ENCODE measurements at regions of chr6 and their contacts with region 1.

Region 1: GRCh38 chr6:52263709-52264540 is 19.6 kb upstream of the IL17F start:
- DNase-seq: peak; percentile 17
- H3K4me3 ChIP-seq: no peak overlapping the region
- CTCF ChIP-seq: peak; percentile 91

Region 2: GRCh38 chr6:52155791-52156576 is 107.9 kb before region 1 on chr6:
- CTCF ChIA-PET with region 1: interaction called, 94 read pairs
- POLR2A ChIA-PET with region 1: no interaction called
- DNase-seq: no peak
- H3K4me3 ChIP-seq: no peak overlapping the region
- CTCF ChIP-seq: no peak

Region 3: DNA sequence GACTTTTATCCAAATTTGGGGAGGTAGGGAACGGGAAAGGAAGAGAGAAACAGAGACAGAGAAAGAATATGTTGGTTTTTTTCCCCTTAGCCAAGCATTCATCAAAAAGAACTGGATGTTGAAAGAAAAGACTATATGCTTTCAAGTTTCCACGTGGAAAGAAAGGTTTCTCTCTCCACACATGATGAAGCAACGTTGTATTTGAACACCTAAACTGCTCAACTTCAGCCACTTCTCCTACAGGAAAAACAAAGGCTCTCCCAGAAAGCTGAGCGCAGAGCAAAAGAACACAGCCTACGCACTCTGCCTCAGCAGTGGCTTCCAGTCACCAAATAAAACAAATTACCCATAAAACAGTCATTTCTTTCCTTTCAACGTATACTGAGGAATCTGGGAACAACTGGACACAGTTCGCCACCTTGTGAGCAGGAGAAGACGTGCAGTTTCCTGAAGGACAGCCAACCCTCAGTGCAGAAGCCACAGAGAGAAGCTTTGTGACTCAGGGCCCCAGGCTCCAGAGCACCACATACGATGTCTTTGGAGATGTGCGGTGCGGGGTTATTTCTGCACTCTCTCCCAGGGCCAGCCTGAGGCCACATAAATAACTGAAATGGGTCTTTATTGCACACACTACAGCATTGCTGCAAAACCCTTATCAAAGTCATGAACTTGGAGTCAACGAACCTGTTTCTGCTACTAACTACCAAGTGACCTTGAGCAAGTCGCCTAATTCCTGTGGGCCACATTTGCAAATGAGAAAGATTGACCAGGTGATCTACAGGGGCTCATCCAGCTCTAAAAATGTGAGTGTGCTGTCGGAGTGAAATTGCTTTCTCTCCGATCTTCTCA is 29.7 kb before region 1 on chr6:
- CTCF ChIA-PET with region 1: interaction called, 11 read pairs
- POLR2A ChIA-PET with region 1: no interaction called
- DNase-seq: peak; percentile 7
- H3K4me3 ChIP-seq: no peak overlapping the region
- CTCF ChIP-seq: peak; percentile 49

Region 4: DNA sequence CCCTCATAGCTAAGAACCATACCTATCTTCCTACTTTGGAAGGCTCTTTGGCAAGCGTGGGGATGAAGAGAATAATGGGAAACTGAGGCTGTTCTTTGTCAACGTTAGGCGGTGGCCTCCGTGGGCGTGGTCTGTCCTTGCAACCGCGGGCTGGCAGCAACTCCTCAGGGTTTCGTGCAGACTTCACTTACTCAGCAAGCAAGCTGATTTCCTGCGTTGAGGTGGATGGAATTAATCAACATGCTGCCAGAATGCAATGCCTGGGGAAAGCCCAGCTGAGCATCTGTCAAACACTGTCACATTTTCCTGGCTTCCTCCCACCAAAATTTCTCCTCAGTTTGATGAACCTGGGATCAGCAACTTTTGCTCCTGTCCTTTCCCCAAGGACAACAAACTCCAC is 10.4 kb before region 1 on chr6:
- CTCF ChIA-PET with region 1: interaction called, 32 read pairs
- POLR2A ChIA-PET with region 1: no interaction called
- DNase-seq: no peak
- H3K4me3 ChIP-seq: no peak overlapping the region
- CTCF ChIP-seq: no peak

Region 5: DNA sequence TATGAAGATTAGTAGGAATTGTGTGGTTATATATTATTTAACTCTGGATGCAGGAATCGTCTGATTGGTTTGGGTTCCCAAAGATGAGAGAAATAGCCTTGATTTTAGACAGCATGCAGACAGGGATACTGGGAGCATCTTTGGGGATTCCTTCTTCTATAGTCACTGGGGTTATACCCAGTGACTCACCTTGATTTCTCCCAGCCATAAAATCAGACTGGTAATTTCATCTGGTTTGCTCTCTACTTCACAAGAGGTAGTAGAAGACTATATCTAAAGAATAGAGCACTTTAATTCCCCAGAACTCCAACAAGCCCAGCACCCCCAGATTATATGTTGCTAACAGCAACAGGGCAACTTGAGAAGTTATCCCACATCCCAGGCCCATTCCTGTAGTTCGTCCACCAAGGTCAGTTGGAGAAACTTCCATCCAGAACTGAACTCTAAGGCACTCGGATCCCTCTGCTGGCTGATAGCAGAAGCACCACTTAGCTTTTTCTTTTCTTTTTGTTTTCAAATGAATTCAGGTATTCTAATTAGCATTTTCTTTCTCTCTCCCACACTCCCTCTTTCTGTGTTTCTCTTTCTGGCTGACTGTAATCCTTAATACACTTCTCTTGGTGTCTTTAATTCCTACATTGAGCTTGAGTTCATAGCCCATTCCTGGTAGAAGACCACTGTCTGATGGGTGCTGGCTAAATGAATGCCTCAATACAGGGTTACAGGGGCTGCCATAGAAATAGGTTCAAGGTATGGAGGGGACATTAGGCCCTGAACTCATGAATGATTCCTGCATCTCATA is 135.8 kb after region 1 on chr6:
- CTCF ChIA-PET with region 1: interaction called, 33 read pairs
- POLR2A ChIA-PET with region 1: no interaction called
- DNase-seq: no peak
- H3K4me3 ChIP-seq: no peak overlapping the region
- CTCF ChIP-seq: peak; percentile 76

Measured in AG04449 (cell line).